ENCODE measurements at regions of chr4 and their contacts with region 1.

Region 1: GRCh38 chr4:98609934-98610333 is 48.5 kb downstream of the TSPAN5 start:
- DNase-seq: no peak
- ATAC-seq: no peak
- H3K4me3 ChIP-seq: no peak overlapping the region
- H3K4me3 Mint-ChIP-seq: no peak overlapping the region
- H3K27ac ChIP-seq: no peak overlapping the region
- H3K27ac Mint-ChIP-seq: no peak overlapping the region
- H3K4me1 ChIP-seq: peaks cover 4 to 7% of the 10 kb centered on the region in 2 donors
- H3K4me1 Mint-ChIP-seq: peaks cover 24 to 68% (median 51%) of the 10 kb centered on the region in 7 donors
- H3K27me3 ChIP-seq: no peaks in the 10 kb centered on the region
- H3K27me3 Mint-ChIP-seq: no peaks in the 10 kb centered on the region

Region 2: DNA sequence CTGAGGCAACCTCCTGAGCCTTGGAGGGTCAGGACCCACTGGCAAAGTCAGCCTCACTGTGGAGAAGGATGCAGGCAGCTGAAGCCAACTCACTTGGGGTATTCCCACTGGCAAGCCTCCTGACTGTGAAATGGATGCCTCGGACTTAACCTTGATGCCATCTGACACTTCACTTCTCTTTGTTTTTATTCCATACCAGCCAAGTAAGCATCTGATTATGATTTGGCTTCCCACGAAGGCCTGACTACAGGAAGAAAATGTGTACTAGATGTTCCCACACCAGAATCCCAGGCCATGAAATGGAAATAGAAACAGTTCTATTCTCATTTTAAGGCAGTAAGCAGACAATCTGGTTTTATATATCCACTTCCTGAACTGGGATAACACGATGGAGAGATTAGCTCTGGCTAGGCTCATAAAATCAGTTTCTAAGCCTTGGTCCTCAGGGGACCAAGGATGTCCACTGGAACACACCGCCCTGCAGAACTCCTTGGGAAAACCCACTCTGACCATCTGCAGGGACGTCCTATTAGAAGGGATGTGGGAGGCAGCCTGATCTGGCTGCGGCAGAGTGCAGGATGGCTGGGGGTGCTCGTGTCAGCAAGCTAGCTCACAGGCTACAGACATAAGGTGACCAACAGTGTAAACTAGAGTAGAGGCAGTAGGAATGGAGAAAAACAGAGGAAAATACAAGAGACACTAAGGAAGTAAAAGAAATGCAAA is 40.8 kb before region 1 on chr4:
- CTCF ChIA-PET with region 1: no interaction called
- POLR2A ChIA-PET with region 1: no interaction called
- intact Hi-C with region 1: loop called in 1 of 2 experiments (anchors 1 kb)
- DNase-seq: no peak
- ATAC-seq: no peak
- H3K4me3 ChIP-seq: no peak overlapping the region
- H3K4me3 Mint-ChIP-seq: no peak overlapping the region
- H3K27ac ChIP-seq: no peak overlapping the region
- H3K27ac Mint-ChIP-seq: no peak overlapping the region
- H3K4me1 ChIP-seq: no peaks in the 10 kb centered on the region
- H3K4me1 Mint-ChIP-seq: peaks cover 9 to 46% (median 26%) of the 10 kb centered on the region in 7 donors
- H3K27me3 ChIP-seq: no peaks in the 10 kb centered on the region
- H3K27me3 Mint-ChIP-seq: no peaks in the 10 kb centered on the region